Esophagus muscularis mucosa (tissue), 4 donors: ENCODE measurements at regions of chr2 and their contacts with region 1.

Region 1: DNA sequence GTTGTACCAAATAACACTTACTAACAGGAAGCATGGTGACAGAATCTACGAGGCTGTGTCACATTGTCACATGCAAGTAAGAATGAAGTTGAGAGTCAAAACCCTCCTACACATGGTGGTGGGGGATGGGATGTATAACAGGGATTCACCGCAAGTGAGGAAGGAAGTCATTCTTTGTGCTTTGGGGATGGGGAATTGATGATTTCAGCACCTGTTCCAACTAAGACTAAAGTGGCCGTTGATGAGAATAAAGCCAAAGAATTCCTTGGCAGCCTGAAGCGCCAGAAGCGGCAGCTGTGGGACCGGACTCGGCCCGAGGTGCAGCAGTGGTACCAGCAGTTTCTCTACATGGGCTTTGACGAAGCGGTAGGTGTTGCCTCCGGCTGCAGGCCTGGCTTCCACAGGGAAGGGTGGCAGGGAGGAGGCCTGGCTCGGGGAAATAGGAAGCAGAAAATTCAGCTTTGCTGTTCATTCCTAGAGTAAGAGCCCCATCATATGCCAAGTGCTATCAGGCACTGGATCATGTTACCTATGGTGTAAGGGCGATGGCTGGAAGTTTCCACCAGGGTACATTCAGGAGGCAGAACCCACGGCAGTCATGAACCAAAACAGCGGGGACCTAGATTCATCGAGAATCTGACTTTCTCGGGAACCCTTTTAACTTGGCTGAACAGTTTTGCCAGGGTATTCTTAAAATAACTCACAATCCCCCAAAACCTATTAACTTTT is 120.3 kb downstream of the UXS1 start:
- DNase-seq: no peak
- H3K4me3 ChIP-seq: no peak overlapping the region
- H3K27ac ChIP-seq: no peak overlapping the region
- H3K4me1 ChIP-seq: peaks cover 0 to 51% (median 31%) of the 10 kb centered on the region in 4 donors
- H3K27me3 ChIP-seq: no peaks in the 10 kb centered on the region
- CTCF ChIP-seq: no peak
- EP300 ChIP-seq: no peak
- POLR2A ChIP-seq: no peak

Region 2: DNA sequence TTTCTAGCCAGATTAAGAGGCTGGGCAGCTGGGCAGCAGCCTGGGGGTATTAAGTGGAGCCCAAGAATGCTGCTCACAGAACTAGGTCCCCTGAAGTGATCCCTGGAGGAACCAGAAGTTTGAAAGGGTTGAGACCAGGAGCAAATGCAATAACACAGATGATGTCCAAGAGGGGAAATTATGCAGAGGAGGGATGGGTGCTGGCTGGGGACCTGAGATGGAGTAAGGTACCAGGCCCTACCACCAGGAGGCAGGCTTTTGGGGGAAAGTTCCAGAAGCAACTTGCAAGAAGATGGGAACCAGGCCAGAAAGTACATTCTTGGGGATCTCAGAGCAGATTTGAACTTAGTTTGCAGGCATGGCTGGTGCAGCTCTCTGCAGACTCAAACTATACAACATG is 154.0 kb before region 1 on chr2:
- intact Hi-C with region 1: no loop called
- DNase-seq: no peak
- H3K4me3 ChIP-seq: no peak overlapping the region
- H3K27ac ChIP-seq: no peak overlapping the region
- H3K4me1 ChIP-seq: peaks cover 0 to 6% (median 0%) of the 10 kb centered on the region in 4 donors
- H3K27me3 ChIP-seq: no peaks in the 10 kb centered on the region
- CTCF ChIP-seq: peak in 1 of 3 experiments; percentile 45
- EP300 ChIP-seq: no peak
- POLR2A ChIP-seq: no peak

Region 3: GRCh38 chr2:106028192-106028591 is 45.6 kb before region 1 on chr2:
- intact Hi-C with region 1: loop called (anchors 5 kb)
- DNase-seq: no peak
- H3K4me3 ChIP-seq: no peak overlapping the region
- H3K27ac ChIP-seq: peak overlapping the region in 1 of 4 donors; percentile 90
- H3K4me1 ChIP-seq: peaks cover 30 to 50% (median 42%) of the 10 kb centered on the region in 4 donors
- H3K27me3 ChIP-seq: no peaks in the 10 kb centered on the region
- CTCF ChIP-seq: no peak
- EP300 ChIP-seq: no peak
- POLR2A ChIP-seq: no peak